ENCODE measurements at regions of chr21 and their contacts with region 1.

Region 1: GRCh38 chr21:26170471-26171257 is at the start of gene APP:
- DNase-seq: peak; percentile 98
- H3K4me3 Mint-ChIP-seq: peak within 1 kb of the TSS; percentile 92
- H3K27ac Mint-ChIP-seq: peak within 1 kb of the TSS; percentile 85
- H3K4me1 Mint-ChIP-seq: peaks cover 20% of the 10 kb centered on the region
- H3K27me3 Mint-ChIP-seq: peaks cover 2% of the 10 kb centered on the region
- total RNA-seq, gene APP: 75.8 and 81.3 TPM in 2 replicates

Region 2: GRCh38 chr21:25607151-25608043 is 563.3 kb before region 1 on chr21 and contains the start of gene MRPL39:
- intact Hi-C with region 1: loop called (anchors 1 kb)
- DNase-seq: peak; percentile 96
- H3K4me3 Mint-ChIP-seq: peak within 1 kb of the TSS; percentile 92
- H3K27ac Mint-ChIP-seq: peak within 1 kb of the TSS; percentile 97
- H3K4me1 Mint-ChIP-seq: peaks cover 25% of the 10 kb centered on the region
- H3K27me3 Mint-ChIP-seq: no peaks in the 10 kb centered on the region
- total RNA-seq, gene MRPL39: 63.2 and 66.0 TPM in 2 replicates

Region 3: GRCh38 chr21:25801217-25802014 is 369.2 kb before region 1 on chr21:
- intact Hi-C with region 1: loop called (anchors 10 kb)
- DNase-seq: peak; percentile 97
- H3K4me3 Mint-ChIP-seq: peak overlapping the region; percentile 55
- H3K27ac Mint-ChIP-seq: no peak overlapping the region
- H3K4me1 Mint-ChIP-seq: peaks cover 6% of the 10 kb centered on the region
- H3K27me3 Mint-ChIP-seq: peaks cover 31% of the 10 kb centered on the region

Region 4: DNA sequence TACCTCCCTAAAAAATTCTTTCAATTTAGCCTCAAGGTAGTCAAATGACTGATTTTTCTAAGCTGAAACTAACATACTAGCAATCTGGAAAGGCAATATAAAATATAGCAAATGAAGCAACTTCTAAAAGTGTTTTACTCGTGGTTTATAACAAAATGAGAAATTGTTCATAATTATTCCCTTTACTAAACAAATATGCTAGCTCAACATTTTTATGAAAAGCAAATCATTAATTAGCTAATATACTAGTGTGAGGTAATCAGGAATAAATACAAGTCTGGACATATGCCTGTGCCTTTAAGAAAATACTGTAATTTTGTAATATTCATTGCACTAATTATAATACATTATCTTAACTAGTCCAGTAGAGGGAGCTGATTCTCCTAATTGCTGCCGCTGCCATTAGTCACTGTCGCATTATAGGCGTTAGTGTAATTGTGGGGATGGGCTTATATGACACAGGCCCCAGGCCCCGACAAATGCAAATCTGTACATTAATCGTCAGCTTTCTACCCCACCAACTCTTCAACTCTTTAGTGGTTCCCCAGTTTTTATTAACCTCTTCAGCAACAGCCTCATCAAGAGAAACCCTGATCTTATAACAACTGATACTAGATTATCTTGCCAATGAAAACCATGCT is 275.0 kb before region 1 on chr21:
- intact Hi-C with region 1: loop called (anchors 2 kb)
- DNase-seq: peak; percentile 65
- H3K4me3 Mint-ChIP-seq: no peak overlapping the region
- H3K27ac Mint-ChIP-seq: no peak overlapping the region
- H3K4me1 Mint-ChIP-seq: peaks cover 5% of the 10 kb centered on the region
- H3K27me3 Mint-ChIP-seq: no peaks in the 10 kb centered on the region

Region 5: DNA sequence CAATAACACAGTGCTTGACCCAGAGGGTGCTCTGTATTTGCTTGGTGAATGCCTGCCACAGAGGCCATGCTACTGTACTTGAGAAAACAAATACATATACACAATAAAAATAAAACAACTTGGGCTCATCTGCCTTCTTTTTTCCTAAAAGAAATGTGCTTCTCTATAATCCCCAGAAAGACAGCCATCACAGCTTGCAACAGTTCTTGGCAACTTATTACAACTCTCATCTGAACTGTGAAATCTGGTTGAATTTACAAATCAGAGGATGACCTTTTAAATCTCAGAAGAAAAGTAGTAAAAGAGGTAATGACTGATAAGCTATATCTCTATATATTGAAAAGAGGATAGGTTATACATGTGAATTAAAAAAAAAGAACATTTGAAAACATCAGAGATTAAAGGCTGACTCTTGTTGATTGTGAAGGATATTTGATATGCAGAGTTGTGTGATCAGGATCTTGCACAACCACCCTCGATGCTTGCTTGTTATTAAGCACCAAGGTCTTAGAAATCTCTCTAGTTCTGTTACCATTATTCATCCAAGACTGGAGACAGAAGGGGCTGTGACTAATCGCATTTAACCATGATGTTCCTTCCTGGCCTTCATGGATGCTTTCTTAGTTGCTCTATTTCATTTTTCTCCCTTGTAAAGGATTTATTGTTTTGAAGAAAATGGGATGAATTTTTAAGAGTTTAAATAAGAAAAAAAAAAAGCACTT is 213.5 kb before region 1 on chr21:
- intact Hi-C with region 1: no loop called
- DNase-seq: peak; percentile 5
- H3K4me3 Mint-ChIP-seq: no peak overlapping the region
- H3K27ac Mint-ChIP-seq: no peak overlapping the region
- H3K4me1 Mint-ChIP-seq: no peaks in the 10 kb centered on the region
- H3K27me3 Mint-ChIP-seq: no peaks in the 10 kb centered on the region

Region 6: DNA sequence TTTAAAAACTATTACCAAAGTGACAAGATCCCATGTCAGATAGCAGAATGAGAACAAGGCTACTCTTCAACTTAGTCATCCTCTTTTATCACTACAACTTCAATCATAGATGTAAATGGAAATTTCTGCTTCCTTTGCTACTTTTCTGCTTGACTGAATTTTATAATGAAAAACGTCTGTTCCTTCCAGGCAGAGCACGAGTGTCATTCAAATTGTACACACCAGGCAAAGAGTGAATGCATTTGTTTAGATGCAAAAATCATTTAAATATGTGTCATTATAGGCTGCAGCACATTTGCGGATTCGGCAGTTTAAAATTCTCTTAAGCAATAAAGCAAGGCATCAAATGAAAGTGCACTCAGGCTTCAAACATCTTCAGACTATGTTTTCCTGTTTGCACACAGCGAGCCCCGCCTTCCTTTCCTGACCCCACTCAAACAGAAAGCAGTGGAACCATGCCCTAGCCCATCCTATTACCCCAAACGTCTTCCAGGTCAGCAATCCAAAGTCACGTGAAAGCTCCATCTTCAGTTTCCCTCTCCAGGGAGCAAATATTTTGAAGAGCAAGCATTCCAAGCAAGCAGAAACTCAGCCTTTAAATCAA is 99.7 kb before region 1 on chr21:
- intact Hi-C with region 1: loop called (anchors 1 kb)
- DNase-seq: peak; percentile 81
- H3K4me3 Mint-ChIP-seq: peak overlapping the region; percentile 83
- H3K27ac Mint-ChIP-seq: peak overlapping the region; percentile 81
- H3K4me1 Mint-ChIP-seq: peaks cover 36% of the 10 kb centered on the region
- H3K27me3 Mint-ChIP-seq: no peaks in the 10 kb centered on the region